Heart left ventricle (tissue), 16 donors: ENCODE measurements at regions of chr20 and their contacts with region 1.

Region 1: DNA sequence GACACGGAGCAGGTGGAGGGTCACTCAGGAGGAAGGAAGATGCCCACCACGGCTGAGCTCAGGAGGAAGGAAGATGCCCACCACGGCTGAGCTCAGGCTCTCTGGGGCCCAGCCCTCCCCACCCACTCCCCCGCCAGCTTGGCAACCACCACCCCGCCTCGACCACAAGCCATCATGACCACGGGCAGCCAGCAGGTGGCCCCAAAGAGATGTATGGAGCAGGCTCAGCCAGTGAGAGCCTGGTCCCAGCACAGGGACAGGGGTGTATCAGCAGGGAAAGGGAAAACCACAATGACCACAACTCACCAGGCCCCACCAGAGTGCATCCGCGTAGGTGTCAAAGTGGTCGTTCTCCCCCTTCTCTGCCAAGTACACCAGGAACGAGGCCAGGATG is 30.4 kb downstream of the KCNQ2 start:
- DNase-seq: peak in 4 of 5 donors; percentile 53 to 76 (median 72)
- ATAC-seq: peak; percentile 54 to 80 (median 70)
- H3K4me3 ChIP-seq: no peak overlapping the region
- H3K27ac ChIP-seq: no peak overlapping the region
- H3K4me1 ChIP-seq: peaks cover 0 to 8% (median 0%) of the 10 kb centered on the region in 12 donors
- H3K27me3 ChIP-seq: peaks cover 0 to 18% (median 0%) of the 10 kb centered on the region in 9 donors
- CTCF ChIP-seq: peak; percentile 27 to 61 (median 44)
- POLR2A ChIP-seq: no peak

Region 2: GRCh38 chr20:63206904-63207303 is 235.2 kb before region 1 on chr20:
- intact Hi-C with region 1: no loop called
- DNase-seq: no peak
- ATAC-seq: peak in 3 of 4 donors; percentile 21 to 44 (median 29)
- H3K4me3 ChIP-seq: no peak overlapping the region
- H3K27ac ChIP-seq: no peak overlapping the region
- H3K4me1 ChIP-seq: peaks cover 0 to 21% (median 10%) of the 10 kb centered on the region in 12 donors
- H3K27me3 ChIP-seq: no peaks in the 10 kb centered on the region
- CTCF ChIP-seq: no peak
- POLR2A ChIP-seq: no peak

Region 3: DNA sequence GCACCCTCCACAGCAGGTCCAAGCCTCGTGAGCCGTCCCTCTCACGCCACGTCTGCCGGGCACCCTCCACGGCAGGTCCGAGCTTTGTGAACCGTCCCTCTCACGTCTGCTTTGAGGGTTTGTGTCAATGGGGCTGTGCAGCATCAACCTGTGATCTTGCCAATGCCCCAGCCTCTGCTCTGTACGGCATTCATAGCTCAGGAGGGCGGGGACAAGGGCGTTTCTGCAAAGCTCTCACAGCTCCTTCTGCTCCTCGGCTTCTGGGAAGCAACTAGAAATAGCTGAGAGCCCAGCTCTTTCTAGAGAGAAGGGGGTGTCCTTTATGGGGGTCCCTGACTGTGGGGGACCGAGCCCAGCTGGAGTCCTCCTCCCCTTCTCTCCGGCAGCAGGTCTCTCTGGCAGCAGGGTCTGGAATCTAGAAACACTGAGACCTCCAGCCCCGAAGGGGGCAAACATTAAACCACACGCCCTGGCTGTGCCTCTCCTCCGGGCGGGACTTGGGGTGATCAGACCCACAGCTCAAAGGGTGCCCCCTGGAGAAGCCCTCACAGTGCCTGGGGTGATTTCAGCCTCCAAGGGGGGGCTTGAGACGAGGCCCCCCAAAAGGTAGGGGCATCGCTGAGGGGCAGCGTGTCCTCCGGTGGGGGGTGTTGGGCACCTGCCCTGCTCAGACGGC is 39.8 kb before region 1 on chr20:
- intact Hi-C with region 1: no loop called
- DNase-seq: no peak
- ATAC-seq: no peak
- H3K4me3 ChIP-seq: no peak overlapping the region
- H3K27ac ChIP-seq: no peak overlapping the region
- H3K4me1 ChIP-seq: no peaks in the 10 kb centered on the region
- H3K27me3 ChIP-seq: peaks cover 0 to 12% (median 0%) of the 10 kb centered on the region in 9 donors
- CTCF ChIP-seq: no peak
- POLR2A ChIP-seq: no peak

Region 4: DNA sequence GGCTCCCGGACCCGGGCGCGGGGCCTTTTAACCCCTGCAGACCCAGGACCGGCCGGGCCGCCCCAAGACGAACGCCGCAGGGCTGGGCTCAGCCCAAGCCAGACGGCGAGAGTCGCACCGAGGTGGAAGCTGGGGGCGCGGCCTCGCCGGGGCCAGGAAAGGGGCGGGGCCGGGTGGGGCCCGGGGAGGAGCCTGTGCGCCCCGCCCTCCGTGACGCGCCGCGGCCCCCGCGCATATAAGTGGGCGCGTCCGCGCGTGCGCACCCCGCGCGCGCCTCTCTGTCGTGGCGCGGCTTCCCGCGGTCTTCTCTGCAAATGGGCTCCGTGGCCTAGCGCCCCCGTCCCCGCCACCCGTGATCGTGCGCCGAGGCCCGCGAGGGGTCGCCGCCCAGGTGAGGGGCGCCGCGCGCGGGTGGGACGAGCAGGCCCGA is 78.4 kb after region 1 on chr20 and contains the start of gene PPDPF:
- intact Hi-C with region 1: loop called in 2 of 10 experiments (anchors 5 to 10 kb)
- DNase-seq: peak; percentile 83 to 94 (median 89)
- ATAC-seq: peak; percentile 70 to 91 (median 87)
- H3K4me3 ChIP-seq: peak within 1 kb of the TSS; percentile 73 to 98 (median 88)
- H3K27ac ChIP-seq: peak within 1 kb of the TSS; percentile 89 to 99 (median 97)
- H3K4me1 ChIP-seq: peaks cover 0 to 35% (median 22%) of the 10 kb centered on the region in 12 donors
- H3K27me3 ChIP-seq: no peaks in the 10 kb centered on the region
- CTCF ChIP-seq: no peak
- POLR2A ChIP-seq: peak in 1 of 2 donors; percentile 91
- total RNA-seq, gene PPDPF: 182 to 424 (median 235) TPM

Region 5: GRCh38 chr20:63580796-63581461 is 138.8 kb after region 1 on chr20:
- intact Hi-C with region 1: loop called in 1 of 10 experiments (anchors 5 kb)
- DNase-seq: no peak
- ATAC-seq: no peak
- H3K4me3 ChIP-seq: no peak overlapping the region
- H3K27ac ChIP-seq: no peak overlapping the region
- H3K4me1 ChIP-seq: peaks cover 0 to 12% (median 0%) of the 10 kb centered on the region in 12 donors
- H3K27me3 ChIP-seq: peaks cover 0 to 11% (median 0%) of the 10 kb centered on the region in 9 donors
- CTCF ChIP-seq: peak in 10 of 12 donors; percentile 6 to 39 (median 30)
- POLR2A ChIP-seq: no peak